Heart right ventricle (tissue), 16 donors: ENCODE measurements at regions of chr22 and their contacts with region 1.

Region 1: GRCh38 chr22:37561212-37562048 is 1.1 kb downstream of the CDC42EP1 start:
- DNase-seq: peak; percentile 92 to 95
- ATAC-seq: peak; percentile 50 to 79 (median 72)
- H3K4me3 ChIP-seq: peak overlapping the region; percentile 61 to 92 (median 74)
- H3K27ac ChIP-seq: peak overlapping the region; percentile 96 to 100 (median 99)
- H3K4me1 ChIP-seq: peaks cover 20 to 91% (median 83%) of the 10 kb centered on the region in 9 donors
- H3K27me3 ChIP-seq: peaks cover 0 to 54% (median 4%) of the 10 kb centered on the region in 7 donors
- CTCF ChIP-seq: peak; percentile 67 to 91 (median 86)

Region 2: DNA sequence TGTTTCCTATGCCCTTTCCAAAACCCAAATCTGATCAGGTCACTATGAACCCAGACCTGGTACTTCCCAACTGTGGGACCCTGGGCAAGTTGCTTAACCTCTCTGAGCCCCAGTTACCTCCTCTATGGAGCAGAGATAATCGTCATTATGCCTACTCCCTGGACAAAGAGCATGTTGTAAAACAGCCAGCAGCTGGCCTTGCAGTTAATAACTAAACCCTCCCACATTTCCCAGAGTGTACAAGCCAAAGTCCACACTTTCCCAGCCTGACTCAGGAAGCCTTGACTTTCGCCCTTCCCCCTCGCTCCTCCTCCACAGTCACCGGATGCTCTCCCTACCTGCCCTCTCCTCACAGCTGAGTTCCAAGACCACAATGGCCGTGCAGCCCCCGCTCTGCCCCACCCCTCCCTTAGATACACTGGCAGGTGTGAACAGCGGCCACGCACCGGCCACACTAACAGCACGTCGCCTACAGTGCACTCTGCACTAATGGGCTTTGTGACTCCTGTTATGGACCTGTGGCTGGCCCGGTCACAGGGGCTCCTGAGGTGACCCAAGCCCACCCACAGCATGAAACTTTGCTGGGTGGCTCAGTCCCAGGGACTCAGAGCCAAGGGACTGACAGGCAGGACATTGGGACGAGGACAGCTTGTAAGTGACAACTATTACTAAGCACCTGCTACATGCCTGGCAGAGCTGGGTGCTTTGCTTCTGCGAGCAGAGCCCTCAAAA is 59.7 kb before region 1 on chr22:
- intact Hi-C with region 1: no loop called
- DNase-seq: peak; percentile 63 to 89
- ATAC-seq: peak; percentile 56 to 90 (median 84)
- H3K4me3 ChIP-seq: peak overlapping the region in 4 of 10 donors; percentile 12 to 36 (median 24)
- H3K27ac ChIP-seq: peak overlapping the region; percentile 66 to 89 (median 84)
- H3K4me1 ChIP-seq: peaks cover 6 to 100% (median 65%) of the 10 kb centered on the region in 9 donors
- H3K27me3 ChIP-seq: peaks cover 0 to 14% (median 0%) of the 10 kb centered on the region in 7 donors
- CTCF ChIP-seq: no peak

Region 3: GRCh38 chr22:37581504-37581903 is 20.1 kb after region 1 on chr22:
- intact Hi-C with region 1: no loop called
- DNase-seq: peak; percentile 55 to 75
- ATAC-seq: peak; percentile 50 to 95 (median 86)
- H3K4me3 ChIP-seq: no peak overlapping the region
- H3K27ac ChIP-seq: peak overlapping the region in 4 of 10 donors; percentile 21 to 48 (median 25)
- H3K4me1 ChIP-seq: peaks cover 0 to 16% (median 7%) of the 10 kb centered on the region in 9 donors
- H3K27me3 ChIP-seq: no peaks in the 10 kb centered on the region
- CTCF ChIP-seq: no peak

Region 4: GRCh38 chr22:37633625-37634416 is 72.4 kb after region 1 on chr22:
- intact Hi-C with region 1: no loop called
- DNase-seq: peak; percentile 88 to 90
- ATAC-seq: peak; percentile 84 to 89 (median 86)
- H3K4me3 ChIP-seq: peak overlapping the region in 8 of 10 donors; percentile 0 to 32 (median 27)
- H3K27ac ChIP-seq: peak overlapping the region; percentile 16 to 96 (median 86)
- H3K4me1 ChIP-seq: peaks cover 15 to 73% (median 45%) of the 10 kb centered on the region in 9 donors
- H3K27me3 ChIP-seq: no peaks in the 10 kb centered on the region
- CTCF ChIP-seq: peak in 5 of 9 donors; percentile 35 to 57 (median 40)

Region 5: DNA sequence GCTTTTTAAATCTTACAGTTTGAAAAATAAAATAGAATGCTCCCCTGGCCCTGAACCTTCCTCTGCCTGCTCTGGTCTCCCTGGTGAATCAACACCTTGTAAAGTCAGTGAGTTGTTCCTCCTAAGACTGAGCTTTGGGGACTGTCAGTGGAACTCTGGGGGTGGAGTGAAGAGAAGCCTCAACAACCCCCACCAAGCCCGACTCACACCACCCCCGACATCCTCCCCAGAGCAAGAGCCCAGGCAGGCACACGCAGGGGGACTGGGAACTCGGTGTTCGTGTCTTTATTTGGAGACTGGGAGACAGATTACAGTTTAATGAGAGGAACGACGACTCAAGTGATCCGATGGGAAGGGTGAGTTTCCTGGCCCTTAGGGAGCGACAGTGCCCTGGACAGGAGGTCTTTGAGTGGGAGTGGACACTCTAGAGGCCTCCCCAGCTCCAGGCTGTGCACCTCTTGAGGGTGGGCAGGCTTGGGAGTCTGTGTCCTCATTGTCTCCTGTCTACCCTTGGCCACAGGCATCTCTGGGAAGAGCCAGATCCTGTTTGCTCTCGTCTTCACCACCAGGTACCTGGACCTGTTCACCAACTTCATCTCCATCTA is 912.7 kb after region 1 on chr22:
- intact Hi-C with region 1: loop called in 1 of 10 experiments (anchors 5 kb)
- DNase-seq: no peak
- ATAC-seq: no peak
- H3K4me3 ChIP-seq: no peak overlapping the region
- H3K27ac ChIP-seq: no peak overlapping the region
- H3K4me1 ChIP-seq: peaks cover 0 to 3% (median 0%) of the 10 kb centered on the region in 9 donors
- H3K27me3 ChIP-seq: peaks cover 0 to under 1% (median 0%) of the 10 kb centered on the region in 7 donors
- CTCF ChIP-seq: no peak